ENCODE measurements at regions of chr10 and their contacts with region 1.

Region 1: GRCh38 chr10:24617771-24618391 is 105.8 kb downstream of the ARHGAP21 start:
- DNase-seq: peak; percentile 45
- ATAC-seq: peak; percentile 96
- H3K4me3 ChIP-seq: no peak overlapping the region
- H3K27ac ChIP-seq: no peak overlapping the region
- H3K4me1 ChIP-seq: peaks cover 0 to 9% of the 10 kb centered on the region in 2 experiments; a peak in 1 of 4 replicates
- H3K27me3 ChIP-seq: no peaks in the 10 kb centered on the region
- CTCF ChIP-seq: peak; percentile 67 to 96 (median 95); a peak in 5 of 6 replicates
- POLR2A ChIP-seq: no peak
- RAD21 ChIP-seq: peak; percentile 61

Region 2: GRCh38 chr10:24603333-24603732 is 14.5 kb before region 1 on chr10:
- CTCF ChIA-PET with region 1: interaction called, 13 read pairs
- POLR2A ChIA-PET with region 1: no interaction called
- RAD21 ChIA-PET with region 1: no interaction called
- intact Hi-C with region 1: no loop called
- DNase-seq: no peak
- ATAC-seq: no peak
- H3K4me3 ChIP-seq: no peak overlapping the region
- H3K27ac ChIP-seq: no peak overlapping the region
- H3K4me1 ChIP-seq: peaks cover 0 to 7% of the 10 kb centered on the region in 2 experiments; a peak in 1 of 4 replicates
- H3K27me3 ChIP-seq: no peaks in the 10 kb centered on the region
- CTCF ChIP-seq: no peak
- POLR2A ChIP-seq: no peak
- RAD21 ChIP-seq: no peak